Activated naive CD4-positive, alpha-beta T cell treated with anti-CD3 and anti-CD28 coated beads for 36 hours (primary cell): ENCODE measurements at regions of chr14 and their contacts with region 1.

Region 1: DNA sequence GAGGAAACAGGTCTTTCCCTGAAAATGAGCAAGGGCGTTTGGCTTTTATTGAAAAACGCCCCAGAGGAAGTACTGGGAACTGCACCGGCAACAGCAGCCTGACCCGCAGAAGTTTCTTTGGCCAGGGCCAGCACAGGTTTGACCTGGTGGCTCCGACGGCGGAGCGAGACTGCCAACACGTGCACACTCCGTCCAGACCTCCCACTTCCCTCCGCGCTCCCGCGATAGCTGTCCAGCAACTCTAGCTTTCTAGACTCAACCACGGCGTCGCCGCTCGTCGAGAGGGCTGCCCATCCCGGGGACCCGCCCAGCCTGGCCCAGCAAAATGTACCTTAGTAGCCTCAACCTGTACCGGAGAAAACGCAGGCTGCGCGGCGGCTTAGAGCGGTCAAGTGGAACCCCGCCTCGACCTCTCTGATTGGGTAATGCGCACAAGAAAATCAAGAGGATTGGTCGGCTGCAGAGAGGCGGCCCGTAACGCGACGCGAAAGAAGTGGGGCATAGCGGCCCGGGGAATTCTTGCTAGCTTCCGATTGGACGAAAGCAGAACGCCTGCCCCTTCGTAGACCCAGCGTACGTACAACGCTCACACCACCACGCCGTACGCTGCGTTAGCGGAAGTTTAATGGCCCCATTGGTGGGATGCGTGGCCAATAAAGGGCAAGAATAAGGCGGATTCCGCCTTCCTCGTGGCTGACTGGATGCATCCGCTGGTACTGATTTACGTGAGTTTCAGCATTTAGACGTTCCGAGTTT is at the start of gene WDR89:
- DNase-seq: peak; percentile 98
- H3K4me3 Mint-ChIP-seq: peak within 1 kb of the TSS; percentile 76
- H3K27ac Mint-ChIP-seq: peak within 1 kb of the TSS; percentile 91
- H3K4me1 Mint-ChIP-seq: peaks cover 48% of the 10 kb centered on the region
- H3K27me3 Mint-ChIP-seq: no peaks in the 10 kb centered on the region
- total RNA-seq, gene WDR89: 26.7 to 27.7 TPM

Region 2: GRCh38 chr14:63478010-63478409 is 163.6 kb before region 1 on chr14:
- CTCF ChIA-PET with region 1: no interaction called
- intact Hi-C with region 1: loop called (anchors 2 kb)
- DNase-seq: peak; percentile 42
- H3K4me3 Mint-ChIP-seq: no peak overlapping the region
- H3K27ac Mint-ChIP-seq: no peak overlapping the region
- H3K4me1 Mint-ChIP-seq: peaks cover 49% of the 10 kb centered on the region
- H3K27me3 Mint-ChIP-seq: no peaks in the 10 kb centered on the region

Region 3: GRCh38 chr14:63692310-63693020 is 50.8 kb after region 1 on chr14:
- CTCF ChIA-PET with region 1: no interaction called
- intact Hi-C with region 1: no loop called
- DNase-seq: no peak
- H3K4me3 Mint-ChIP-seq: no peak overlapping the region
- H3K27ac Mint-ChIP-seq: no peak overlapping the region
- H3K4me1 Mint-ChIP-seq: peaks cover 5% of the 10 kb centered on the region
- H3K27me3 Mint-ChIP-seq: no peaks in the 10 kb centered on the region

Region 4: GRCh38 chr14:63727774-63728728 is 86.4 kb after region 1 on chr14 and contains the start of gene SGPP1:
- CTCF ChIA-PET with region 1: interaction called, 6 read pairs
- intact Hi-C with region 1: loop called (anchors 1 kb)
- DNase-seq: peak; percentile 80
- H3K4me3 Mint-ChIP-seq: peak within 1 kb of the TSS; percentile 99
- H3K27ac Mint-ChIP-seq: peak within 1 kb of the TSS; percentile 83
- H3K4me1 Mint-ChIP-seq: peaks cover 30% of the 10 kb centered on the region
- H3K27me3 Mint-ChIP-seq: no peaks in the 10 kb centered on the region
- total RNA-seq, gene SGPP1: 10.1 to 10.6 TPM

Region 5: DNA sequence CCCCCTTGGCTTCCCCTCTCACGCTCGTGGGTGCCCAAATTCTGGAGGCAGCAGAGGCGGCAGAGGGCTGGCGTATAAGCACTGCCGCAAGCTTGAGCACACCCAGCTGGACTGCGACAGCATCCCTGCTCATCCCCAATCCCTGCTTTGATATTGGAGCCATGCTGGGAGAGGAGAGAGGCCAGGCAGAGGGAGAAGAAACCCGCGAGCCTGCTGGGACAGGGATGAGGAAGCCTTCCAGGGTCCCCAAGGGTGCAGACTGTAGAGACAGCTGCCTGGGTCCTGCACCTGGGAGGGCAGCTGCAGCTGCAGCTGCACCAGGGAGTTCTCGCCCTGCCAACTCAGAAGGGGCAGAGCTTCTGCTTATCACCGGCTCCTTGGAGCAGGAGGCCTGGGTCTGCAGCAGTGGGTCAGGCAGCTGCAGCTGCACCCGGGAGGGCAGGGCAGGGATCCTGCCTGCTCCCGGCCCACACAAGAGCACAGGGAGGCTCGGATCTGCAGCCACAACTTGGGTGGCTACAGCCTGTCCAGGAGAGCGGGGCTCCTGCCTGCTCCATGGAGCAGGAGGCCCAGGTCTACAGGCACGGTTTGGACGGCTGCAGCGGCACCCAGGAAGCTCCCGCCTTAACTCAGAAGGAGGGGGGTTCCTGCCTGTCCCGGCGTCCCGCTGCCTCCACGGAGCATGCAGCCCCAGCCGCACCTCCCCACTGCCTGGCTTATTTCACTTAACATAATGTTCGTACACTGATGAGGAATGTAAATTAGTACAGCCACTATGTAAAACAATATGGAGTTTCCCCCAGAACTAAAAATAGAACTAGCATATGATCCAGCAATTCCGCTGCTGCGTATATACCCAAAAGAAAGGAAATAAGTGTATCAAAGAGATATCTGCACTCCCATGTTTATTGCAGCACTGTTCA is 146.6 kb after region 1 on chr14:
- CTCF ChIA-PET with region 1: no interaction called
- intact Hi-C with region 1: no loop called
- DNase-seq: no peak
- H3K4me3 Mint-ChIP-seq: no peak overlapping the region
- H3K27ac Mint-ChIP-seq: no peak overlapping the region
- H3K4me1 Mint-ChIP-seq: no peaks in the 10 kb centered on the region
- H3K27me3 Mint-ChIP-seq: no peaks in the 10 kb centered on the region

Region 6: GRCh38 chr14:64338616-64339316 is 697.1 kb after region 1 on chr14:
- CTCF ChIA-PET with region 1: no interaction called
- intact Hi-C with region 1: loop called (anchors 1 kb)
- DNase-seq: peak; percentile 95
- H3K4me3 Mint-ChIP-seq: peak overlapping the region; percentile 92
- H3K27ac Mint-ChIP-seq: peak overlapping the region; percentile 86
- H3K4me1 Mint-ChIP-seq: peaks cover 19% of the 10 kb centered on the region
- H3K27me3 Mint-ChIP-seq: no peaks in the 10 kb centered on the region